GM23248 (cell line): ENCODE measurements at regions of chr11 and their contacts with region 1.

Region 1: DNA sequence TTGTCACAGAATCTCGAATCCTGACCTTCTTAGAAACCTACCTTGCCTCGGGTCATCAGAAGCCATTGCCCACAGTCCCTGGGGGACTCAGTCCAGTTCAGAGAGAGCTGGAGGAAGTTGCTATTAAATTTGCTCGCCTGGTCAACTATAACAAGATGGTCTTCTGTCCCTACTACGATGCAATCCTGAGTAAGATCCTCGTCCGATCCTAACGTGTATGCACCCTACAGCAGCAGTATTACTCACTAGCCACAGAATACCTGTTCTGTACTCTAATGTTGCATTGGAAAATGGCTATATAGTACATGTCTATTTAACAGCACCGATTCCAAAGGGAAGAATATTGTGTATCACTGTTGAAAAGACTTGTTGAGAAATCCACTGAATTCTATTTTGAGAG is 33.1 kb downstream of the TCP11L1 start:
- DNase-seq: no peak
- H3K4me3 ChIP-seq: no peak overlapping the region
- H3K27ac ChIP-seq: no peak overlapping the region
- H3K4me1 ChIP-seq: no peaks in the 10 kb centered on the region
- H3K27me3 ChIP-seq: no peaks in the 10 kb centered on the region

Region 2: GRCh38 chr11:32960553-32961164 is 111.8 kb before region 1 on chr11:
- in situ Hi-C with region 1: loop called (anchors 5 kb)
- DNase-seq: peak; percentile 72
- H3K4me3 ChIP-seq: no peak overlapping the region
- H3K27ac ChIP-seq: no peak overlapping the region
- H3K4me1 ChIP-seq: no peaks in the 10 kb centered on the region
- H3K27me3 ChIP-seq: no peaks in the 10 kb centered on the region

Region 3: DNA sequence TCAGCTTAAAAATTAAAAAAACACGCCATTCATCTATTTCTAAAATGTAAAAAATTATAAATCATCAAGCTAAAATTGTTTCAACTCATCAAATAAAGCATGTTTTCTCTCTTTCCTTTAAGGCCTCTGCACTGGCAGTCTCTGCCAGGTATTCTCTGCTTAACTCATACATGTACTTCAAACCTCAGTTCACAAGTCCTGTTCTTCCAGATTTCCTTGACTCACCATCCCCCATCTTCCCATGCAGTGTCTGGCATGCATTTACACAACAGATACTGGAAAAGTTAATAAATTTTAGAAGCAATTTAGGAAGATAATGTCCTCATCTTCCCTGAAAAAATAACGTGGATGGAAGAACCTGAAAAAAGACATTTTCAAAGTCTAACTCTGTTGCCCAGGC is 56.3 kb after region 1 on chr11:
- in situ Hi-C with region 1: no loop called
- DNase-seq: no peak
- H3K4me3 ChIP-seq: no peak overlapping the region
- H3K27ac ChIP-seq: no peak overlapping the region
- H3K4me1 ChIP-seq: no peaks in the 10 kb centered on the region
- H3K27me3 ChIP-seq: no peaks in the 10 kb centered on the region